H1 (cell line): ENCODE measurements at regions of chr5 and their contacts with region 1.

Region 1: DNA sequence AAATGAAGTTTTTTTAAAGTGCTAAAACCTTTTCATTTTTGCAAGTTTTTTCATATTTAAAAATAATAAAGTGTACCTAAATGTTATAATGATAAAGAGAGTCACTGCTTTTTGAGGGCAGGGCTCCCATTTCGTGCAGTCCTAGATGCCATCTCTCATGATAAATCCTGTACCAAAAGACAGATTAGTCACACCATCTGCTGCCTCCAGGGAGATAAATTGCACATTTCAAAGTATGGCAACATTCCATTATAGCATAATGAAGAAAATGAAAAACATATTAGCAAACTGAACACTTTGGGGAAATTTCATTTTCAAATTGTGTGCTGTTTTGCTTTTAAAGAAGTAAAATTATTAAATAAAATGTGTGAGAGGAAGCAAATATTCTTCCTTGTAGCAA is 257.2 kb downstream of the KIAA0825 start:
- DNase-seq: no peak
- H3K4me3 ChIP-seq: peak overlapping the region; percentile 53 to 71 (median 66)
- H3K27ac ChIP-seq: no peak overlapping the region; the same call in 1 of the 2 replicates
- H3K4me1 ChIP-seq: peaks cover 2 to 24% (median 7%) of the 10 kb centered on the region in 4 experiments; a peak in 5 of 7 replicates
- H3K27me3 ChIP-seq: no peaks in the 10 kb centered on the region
- CTCF ChIP-seq: no peak
- EP300 ChIP-seq: no peak
- POLR2A ChIP-seq: no peak
- RAD21 ChIP-seq: no peak

Region 2: GRCh38 chr5:94316916-94317838 is 44.0 kb before region 1 on chr5:
- CTCF ChIA-PET with region 1: no interaction called
- POLR2A ChIA-PET with region 1: interaction called, 12 read pairs
- DNase-seq: no peak
- H3K4me3 ChIP-seq: no peak overlapping the region
- H3K27ac ChIP-seq: no peak overlapping the region
- H3K4me1 ChIP-seq: peaks cover 0 to 3% (median 0%) of the 10 kb centered on the region in 4 experiments; a peak in 1 of 7 replicates
- H3K27me3 ChIP-seq: no peaks in the 10 kb centered on the region
- CTCF ChIP-seq: no peak
- EP300 ChIP-seq: no peak
- POLR2A ChIP-seq: no peak
- RAD21 ChIP-seq: no peak

Region 3: DNA sequence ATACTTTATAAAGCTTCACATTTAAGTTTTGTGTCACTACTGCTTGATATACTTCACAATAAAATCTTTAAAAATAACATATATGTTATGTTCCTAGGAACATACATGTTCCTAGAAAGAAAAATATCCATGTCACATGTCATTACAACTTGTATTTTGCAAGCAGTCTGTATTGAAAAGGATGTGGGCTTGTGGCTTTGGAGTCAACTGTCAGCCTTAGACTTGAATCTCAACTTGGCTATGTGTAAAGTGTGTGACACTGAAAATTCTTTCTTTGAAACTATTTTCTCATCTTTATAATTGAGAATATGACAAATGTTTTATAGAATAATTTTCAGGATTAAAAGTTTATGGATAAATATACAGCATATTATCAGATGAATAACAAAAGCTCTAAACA is 15.9 kb before region 1 on chr5:
- CTCF ChIA-PET with region 1: no interaction called
- POLR2A ChIA-PET with region 1: interaction called, 93 read pairs
- DNase-seq: no peak
- H3K4me3 ChIP-seq: no peak overlapping the region
- H3K27ac ChIP-seq: no peak overlapping the region
- H3K4me1 ChIP-seq: no peaks in the 10 kb centered on the region
- H3K27me3 ChIP-seq: no peaks in the 10 kb centered on the region
- CTCF ChIP-seq: no peak
- EP300 ChIP-seq: no peak
- POLR2A ChIP-seq: peak in 1 of 2 experiments; percentile 46; a peak in 1 of 3 replicates
- RAD21 ChIP-seq: no peak

Region 4: GRCh38 chr5:94376672-94377345 is 15.6 kb after region 1 on chr5:
- CTCF ChIA-PET with region 1: interaction called, 3 read pairs
- POLR2A ChIA-PET with region 1: interaction called, 19 read pairs
- DNase-seq: no peak
- H3K4me3 ChIP-seq: no peak overlapping the region
- H3K27ac ChIP-seq: no peak overlapping the region
- H3K4me1 ChIP-seq: peaks cover 0 to 4% (median 3%) of the 10 kb centered on the region in 4 experiments; a peak in 3 of 7 replicates
- H3K27me3 ChIP-seq: no peaks in the 10 kb centered on the region
- CTCF ChIP-seq: no peak
- EP300 ChIP-seq: no peak
- POLR2A ChIP-seq: no peak
- RAD21 ChIP-seq: no peak

Region 5: GRCh38 chr5:94385767-94386166 is 24.6 kb after region 1 on chr5:
- CTCF ChIA-PET with region 1: interaction called, 3 read pairs
- POLR2A ChIA-PET with region 1: interaction called, 10 read pairs
- DNase-seq: no peak
- H3K4me3 ChIP-seq: no peak overlapping the region
- H3K27ac ChIP-seq: no peak overlapping the region
- H3K4me1 ChIP-seq: peaks cover 0 to 9% (median 1%) of the 10 kb centered on the region in 4 experiments; a peak in 3 of 7 replicates
- H3K27me3 ChIP-seq: no peaks in the 10 kb centered on the region
- CTCF ChIP-seq: no peak
- EP300 ChIP-seq: no peak
- POLR2A ChIP-seq: no peak
- RAD21 ChIP-seq: no peak

Region 6: DNA sequence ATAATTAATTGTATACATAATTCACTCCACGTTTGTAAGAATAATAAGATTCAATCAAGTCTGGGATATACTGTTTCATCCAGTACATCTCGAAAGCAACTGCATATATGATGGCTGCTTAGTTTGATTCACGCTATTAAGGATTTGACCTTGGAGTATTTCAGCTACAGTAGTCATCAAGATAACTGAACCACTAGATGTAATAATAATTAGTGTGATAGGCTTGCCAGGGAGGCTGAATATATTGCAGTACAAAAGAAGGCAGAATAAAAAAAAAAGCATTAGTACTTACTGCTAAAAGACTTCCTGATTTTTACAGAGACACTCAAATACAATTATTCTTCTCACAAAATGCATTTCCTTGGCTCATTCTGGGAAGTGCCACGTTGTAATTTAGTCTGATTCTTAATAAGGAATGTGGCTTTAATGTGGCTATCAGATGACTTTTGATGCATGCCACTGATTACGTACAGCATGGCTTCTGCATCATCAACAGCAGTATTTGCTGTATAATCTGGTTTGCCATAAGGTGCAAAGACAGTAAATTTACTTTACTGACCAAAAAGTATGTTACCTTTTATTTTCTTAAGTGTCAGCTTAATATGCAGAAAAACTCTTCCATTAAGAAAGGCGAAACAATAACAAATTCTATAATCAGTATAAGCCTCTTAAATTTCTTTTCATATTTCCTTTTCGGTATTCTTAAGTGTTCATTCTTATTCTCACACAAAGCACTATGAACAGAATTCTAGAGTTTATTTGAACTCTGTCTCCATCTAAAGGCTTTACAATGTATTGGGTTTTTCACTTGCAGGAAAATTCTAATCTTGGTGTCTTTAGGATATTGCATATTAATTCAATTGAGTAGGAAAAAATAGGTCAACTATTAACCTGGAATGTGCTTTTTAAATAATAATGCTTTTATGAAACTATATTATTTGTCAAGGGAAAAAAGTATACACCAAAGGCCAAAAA is 423.7 kb after region 1 on chr5:
- CTCF ChIA-PET with region 1: no interaction called
- POLR2A ChIA-PET with region 1: no interaction called
- DNase-seq: no peak
- H3K4me3 ChIP-seq: no peak overlapping the region
- H3K27ac ChIP-seq: no peak overlapping the region
- H3K4me1 ChIP-seq: no peaks in the 10 kb centered on the region
- H3K27me3 ChIP-seq: no peaks in the 10 kb centered on the region
- CTCF ChIP-seq: peak in 1 of 3 experiments; percentile 2; a peak in 1 of 4 replicates
- EP300 ChIP-seq: no peak
- POLR2A ChIP-seq: no peak
- RAD21 ChIP-seq: peak in 1 of 2 experiments; percentile 24; a peak in 2 of 4 replicates